Right ventricle myocardium inferior (tissue), 1 donor: ENCODE measurements at regions of chr16 and their contacts with region 1.

Region 1: DNA sequence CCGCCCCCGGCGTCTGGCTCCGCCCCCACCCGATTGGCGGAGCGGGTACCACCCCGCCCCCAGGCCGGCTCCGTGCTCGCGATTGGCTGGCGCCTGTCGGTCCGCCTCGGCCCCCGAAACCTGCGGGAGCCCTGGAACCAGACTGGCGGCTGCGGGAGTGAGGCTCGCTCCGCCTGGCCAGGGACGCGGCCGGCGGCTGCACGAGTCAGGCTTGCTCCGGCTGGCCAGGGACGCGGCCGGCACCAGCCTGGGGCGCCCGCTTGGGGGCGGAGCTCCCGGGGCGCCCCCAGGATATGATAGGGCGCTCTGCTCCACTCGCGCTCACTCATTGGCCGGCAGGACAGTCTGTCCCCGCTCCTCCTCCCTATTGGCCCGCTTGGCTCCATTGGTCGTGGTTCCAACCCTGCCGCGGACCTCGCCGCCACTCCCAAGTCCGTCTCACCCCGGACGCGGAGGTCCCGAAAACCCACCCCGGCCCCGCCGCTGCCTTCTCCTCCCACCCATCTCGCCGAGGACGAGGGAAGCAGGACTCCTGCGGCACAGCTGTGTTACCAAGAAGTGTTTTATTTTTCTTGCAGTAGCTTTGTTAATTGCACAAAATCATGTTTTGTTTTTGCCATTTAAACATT is 340 bp upstream of the ROGDI start:
- DNase-seq: peak; percentile 96
- ATAC-seq: peak; percentile 93

Region 2: GRCh38 chr16:4734063-4734729 is 68.6 kb before region 1 on chr16 and contains the starts of genes ANKS3 and DNAAF8:
- intact Hi-C with region 1: loop called (anchors 5 kb)
- DNase-seq: peak; percentile 97
- ATAC-seq: peak; percentile 98
- total RNA-seq, gene ANKS3: 9.1 TPM
- total RNA-seq, gene DNAAF8: 1.5 TPM

Region 3: DNA sequence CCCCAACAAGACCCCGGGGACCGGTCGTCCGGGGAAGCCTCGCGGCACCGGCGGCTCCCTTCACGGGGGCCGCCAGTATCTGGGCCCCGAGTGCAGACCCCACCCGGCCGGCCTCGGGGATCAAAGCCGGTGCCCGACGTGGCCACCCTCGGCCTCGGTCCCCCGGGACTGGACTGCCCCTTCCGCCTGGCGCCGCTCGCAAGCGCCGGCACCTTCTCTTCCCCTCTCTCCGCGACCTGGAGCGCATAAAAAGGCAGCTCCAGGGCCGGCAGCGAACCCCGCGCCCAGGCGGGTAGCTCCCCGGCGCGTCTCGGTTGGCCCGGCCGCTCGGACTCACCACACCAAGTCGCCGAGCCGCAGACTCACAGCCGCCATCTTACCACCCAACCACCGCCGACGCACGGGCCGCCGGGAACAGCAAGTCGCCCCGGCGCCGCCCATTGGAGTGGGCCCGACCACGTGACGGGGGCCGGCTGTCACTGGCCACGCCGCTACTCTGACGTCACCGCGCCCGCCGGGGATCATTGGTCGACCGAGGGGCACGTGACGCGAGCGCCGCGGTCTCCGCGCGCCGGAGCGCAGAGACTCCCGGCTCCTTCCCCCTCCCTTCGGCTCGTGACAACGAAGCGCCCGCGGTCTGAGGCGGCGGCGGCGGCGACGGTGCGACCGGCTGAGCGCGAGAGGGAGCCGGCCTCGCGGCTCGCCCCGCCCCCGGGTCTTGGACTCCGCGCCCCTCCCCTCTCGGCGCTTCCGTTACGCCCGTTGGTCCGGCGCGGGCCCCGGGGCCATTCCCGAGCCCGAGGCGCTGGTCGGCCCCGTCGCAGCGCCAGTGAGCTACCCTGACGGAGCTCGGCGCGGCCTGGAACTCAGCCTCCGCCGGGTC is 44.4 kb after region 1 on chr16 and contains the starts of genes GLYR1 and UBN1:
- intact Hi-C with region 1: loop called (anchors 5 kb)
- DNase-seq: peak; percentile 100
- ATAC-seq: peak; percentile 98
- total RNA-seq, gene GLYR1: 88.8 TPM
- total RNA-seq, gene UBN1: 45.2 TPM

Region 4: GRCh38 chr16:4936991-4937781 is 134.4 kb after region 1 on chr16 and contains the start of gene PPL:
- intact Hi-C with region 1: loop called (anchors 5 kb)
- DNase-seq: peak; percentile 86
- ATAC-seq: peak; percentile 60
- total RNA-seq, gene PPL: 20.2 TPM